ENCODE measurements at regions of chr1 and their contacts with region 1.

Region 1: GRCh38 chr1:204363335-204364124 is 3.8 kb upstream of the PLEKHA6 start:
- DNase-seq: peak; percentile 55 to 91
- ATAC-seq: peak; percentile 91 to 98 (median 96)
- H3K4me3 ChIP-seq: peak overlapping the region; percentile 43
- H3K4me3 Mint-ChIP-seq: peak overlapping the region; percentile 61
- H3K27ac ChIP-seq: no peak overlapping the region
- H3K27ac Mint-ChIP-seq: peak overlapping the region in 1 of 2 donors; percentile 60
- H3K4me1 ChIP-seq: peaks cover 14% of the 10 kb centered on the region
- H3K4me1 Mint-ChIP-seq: peaks cover 8 to 13% of the 10 kb centered on the region in 2 donors
- H3K27me3 ChIP-seq: peaks cover 3% of the 10 kb centered on the region
- H3K27me3 Mint-ChIP-seq: peaks cover 0 to 7% of the 10 kb centered on the region in 2 donors
- CTCF ChIP-seq: peak; percentile 89

Region 2: DNA sequence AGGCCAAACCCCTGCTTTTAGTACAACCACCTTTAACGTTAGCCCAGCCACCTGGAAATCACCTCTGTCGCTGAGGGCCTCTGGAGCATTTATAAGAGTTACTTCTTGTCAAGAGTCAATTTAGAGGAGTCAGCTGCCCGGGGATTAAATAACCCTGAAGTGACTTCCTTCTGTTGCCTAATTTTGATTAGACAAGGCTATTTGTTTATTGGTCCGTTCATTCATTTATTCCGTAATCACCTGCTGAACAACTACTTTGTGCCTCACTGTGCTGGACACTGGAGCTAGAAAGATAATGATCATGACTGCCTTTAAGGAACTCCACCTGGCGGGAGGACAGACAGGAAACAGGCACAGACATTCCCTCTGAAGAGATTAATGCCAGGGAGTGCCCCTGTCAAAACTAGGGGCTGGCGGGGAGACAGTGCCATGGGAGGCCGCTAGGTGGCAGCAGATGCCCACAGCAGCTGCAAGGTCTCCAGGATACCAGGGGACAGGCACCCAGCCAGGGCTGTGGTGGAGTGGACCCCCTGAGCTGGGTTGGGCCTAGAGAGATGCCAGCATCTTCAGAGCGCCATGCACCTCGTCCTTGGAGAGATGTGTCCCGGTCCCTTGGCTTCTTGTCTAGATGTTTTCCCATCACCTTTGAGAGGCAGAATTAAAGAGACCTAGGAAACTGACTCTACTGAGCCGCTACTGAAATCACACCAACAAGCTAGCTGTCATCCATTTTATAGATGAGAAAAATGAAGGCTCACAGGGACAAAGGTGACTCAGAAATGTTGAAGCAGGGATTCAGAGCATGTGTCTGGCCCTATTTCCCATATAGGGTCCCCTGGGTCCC is 201.1 kb before region 1 on chr1:
- intact Hi-C with region 1: loop called (anchors 1 kb)
- DNase-seq: peak; percentile 77 to 86
- ATAC-seq: peak; percentile 81 to 99 (median 97)
- H3K4me3 ChIP-seq: no peak overlapping the region
- H3K4me3 Mint-ChIP-seq: no peak overlapping the region
- H3K27ac ChIP-seq: no peak overlapping the region
- H3K27ac Mint-ChIP-seq: no peak overlapping the region
- H3K4me1 ChIP-seq: no peaks in the 10 kb centered on the region
- H3K4me1 Mint-ChIP-seq: no peaks in the 10 kb centered on the region
- H3K27me3 ChIP-seq: no peaks in the 10 kb centered on the region
- H3K27me3 Mint-ChIP-seq: peaks cover 0 to 4% of the 10 kb centered on the region in 2 donors
- CTCF ChIP-seq: peak; percentile 98

Region 3: DNA sequence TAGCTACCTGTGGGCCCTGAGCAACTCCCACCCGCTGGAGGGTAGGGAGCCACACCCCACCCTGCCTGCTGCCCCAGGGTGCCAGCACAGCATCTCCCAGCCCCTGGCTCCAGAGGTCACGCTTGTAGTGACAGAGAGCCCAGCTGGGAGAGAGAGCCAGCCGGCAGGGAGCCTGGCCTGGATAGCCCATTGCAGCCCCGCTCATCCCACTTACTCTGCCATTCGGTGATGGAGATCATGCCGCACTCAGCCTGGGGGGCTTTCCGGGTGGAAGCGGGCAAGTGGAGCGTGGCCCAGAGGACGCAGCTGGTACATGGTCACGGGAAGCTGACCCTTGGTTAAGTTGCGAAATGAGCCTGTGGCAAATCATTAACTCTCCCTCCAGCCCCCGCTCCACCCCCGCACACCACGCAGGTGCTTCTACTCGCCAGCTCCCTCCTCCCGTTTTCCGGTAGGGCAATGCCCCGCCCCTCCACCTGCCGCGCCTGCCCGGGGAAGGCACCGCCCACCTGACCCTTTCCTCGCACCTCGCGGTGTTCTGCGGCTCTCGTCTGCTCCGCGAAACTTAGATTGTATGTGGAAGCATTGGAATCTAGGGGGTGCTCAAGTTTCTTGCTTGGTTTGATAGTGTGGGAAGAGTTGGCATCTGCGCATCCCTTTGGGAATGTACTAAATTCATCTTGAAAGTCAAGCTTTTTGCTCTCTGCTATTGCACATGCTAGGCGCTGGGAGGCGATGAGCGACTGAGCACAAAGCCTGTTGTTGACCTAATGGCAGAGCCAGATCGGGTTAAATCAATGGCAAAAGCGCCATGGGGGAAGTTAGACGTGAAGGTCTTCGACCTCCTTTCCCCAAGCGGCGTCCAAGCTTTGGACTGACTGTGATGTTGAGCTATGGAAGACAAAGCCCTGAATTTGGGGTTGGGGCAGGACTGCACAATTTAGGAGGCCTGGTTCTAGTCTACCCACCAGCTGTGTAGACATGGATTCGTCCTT is 149.6 kb before region 1 on chr1 and contains the start of gene GOLT1A:
- intact Hi-C with region 1: loop called (anchors 1 kb)
- DNase-seq: peak in 1 of 2 donors; percentile 63
- ATAC-seq: peak in 2 of 3 donors; percentile 61 to 70
- H3K4me3 ChIP-seq: no peak within 1 kb of the TSS
- H3K4me3 Mint-ChIP-seq: peak within 1 kb of the TSS; percentile 75
- H3K27ac ChIP-seq: no peak within 1 kb of the TSS
- H3K27ac Mint-ChIP-seq: no peak within 1 kb of the TSS
- H3K4me1 ChIP-seq: peaks cover 16% of the 10 kb centered on the region
- H3K4me1 Mint-ChIP-seq: peaks cover 11 to 15% of the 10 kb centered on the region in 2 donors
- H3K27me3 ChIP-seq: no peaks in the 10 kb centered on the region
- H3K27me3 Mint-ChIP-seq: peaks cover 0 to 7% of the 10 kb centered on the region in 2 donors
- CTCF ChIP-seq: no peak
- total RNA-seq, gene GOLT1A: not detected

Region 4: GRCh38 chr1:204257954-204258752 is 105.4 kb before region 1 on chr1:
- intact Hi-C with region 1: loop called (anchors 1 kb)
- DNase-seq: peak; percentile 17 to 47
- ATAC-seq: peak in 1 of 3 donors; percentile 42
- H3K4me3 ChIP-seq: no peak overlapping the region
- H3K4me3 Mint-ChIP-seq: no peak overlapping the region
- H3K27ac ChIP-seq: no peak overlapping the region
- H3K27ac Mint-ChIP-seq: no peak overlapping the region
- H3K4me1 ChIP-seq: no peaks in the 10 kb centered on the region
- H3K4me1 Mint-ChIP-seq: no peaks in the 10 kb centered on the region
- H3K27me3 ChIP-seq: no peaks in the 10 kb centered on the region
- H3K27me3 Mint-ChIP-seq: peaks cover 0 to 3% of the 10 kb centered on the region in 2 donors
- CTCF ChIP-seq: no peak